ENCODE measurements at regions of chr21 and their contacts with region 1.

Region 1: GRCh38 chr21:41816220-41817165 is 49.6 kb upstream of the RIPK4 start:
- DNase-seq: peak; percentile 38
- H3K4me3 ChIP-seq: no peak overlapping the region
- H3K27ac ChIP-seq: no peak overlapping the region
- H3K4me1 ChIP-seq: peaks cover 6% of the 10 kb centered on the region
- H3K27me3 ChIP-seq: no peaks in the 10 kb centered on the region
- CTCF ChIP-seq: peak; percentile 60 to 62

Region 2: DNA sequence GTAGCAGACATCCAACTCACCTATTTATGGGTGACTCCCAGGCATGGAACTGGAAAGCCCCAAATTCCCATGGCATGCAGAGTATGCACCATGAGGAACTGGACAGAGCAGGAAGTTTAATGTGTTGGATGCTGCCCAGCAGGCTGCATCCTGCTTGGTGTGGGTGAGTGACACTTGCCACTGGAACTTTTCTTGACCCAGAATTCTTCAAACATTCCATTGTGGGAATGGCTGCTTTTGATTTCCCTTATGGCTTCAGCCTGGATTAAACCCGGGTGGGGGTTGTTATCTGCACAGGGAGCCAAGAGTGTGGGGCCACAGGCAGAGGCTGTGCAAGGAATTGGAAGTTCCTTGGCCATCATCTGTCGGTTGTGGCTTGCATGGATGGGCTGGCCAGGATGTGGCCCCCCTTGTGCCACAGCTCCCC is 675.4 kb before region 1 on chr21:
- CTCF ChIA-PET with region 1: no interaction called
- dilution Hi-C with region 1: no loop called
- in situ Hi-C with region 1: no loop called
- intact Hi-C with region 1: no loop called
- DNase-seq: peak; percentile 69
- H3K4me3 ChIP-seq: no peak overlapping the region
- H3K27ac ChIP-seq: peak overlapping the region; percentile 6
- H3K4me1 ChIP-seq: peaks cover 29% of the 10 kb centered on the region
- H3K27me3 ChIP-seq: no peaks in the 10 kb centered on the region
- CTCF ChIP-seq: no peak

Region 3: DNA sequence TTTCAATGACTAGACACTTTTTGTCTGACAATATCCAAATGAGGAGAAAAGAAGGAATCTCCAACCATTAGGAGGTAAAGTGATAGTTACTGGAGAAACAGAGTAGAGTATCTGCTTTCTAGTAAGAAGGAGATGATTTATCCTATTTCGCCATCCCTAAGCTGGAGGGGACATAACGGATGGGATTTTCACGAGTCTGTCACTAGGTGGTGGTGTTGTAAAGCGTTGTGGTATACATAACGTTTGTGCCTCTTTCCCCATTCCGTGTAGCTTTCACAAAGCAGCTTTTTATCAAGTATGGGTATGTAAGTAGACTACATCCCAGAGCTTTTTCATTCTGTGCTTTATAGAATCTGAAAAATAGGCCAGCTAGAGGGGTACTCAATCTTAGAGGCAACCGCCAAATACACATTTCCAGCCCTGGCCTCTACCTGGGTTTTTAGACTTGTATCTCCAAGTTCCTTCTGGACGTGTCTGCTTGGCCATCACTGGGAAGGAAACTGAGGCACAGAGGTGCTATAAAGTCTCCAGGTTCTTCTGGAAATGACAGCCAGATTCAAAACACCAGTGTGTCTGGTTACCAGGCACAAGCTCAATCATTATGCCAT is 533.2 kb before region 1 on chr21:
- CTCF ChIA-PET with region 1: interaction called, 8 read pairs
- dilution Hi-C with region 1: no loop called
- in situ Hi-C with region 1: no loop called
- intact Hi-C with region 1: loop called (anchors 1 kb)
- DNase-seq: peak; percentile 69
- H3K4me3 ChIP-seq: no peak overlapping the region
- H3K27ac ChIP-seq: no peak overlapping the region
- H3K4me1 ChIP-seq: no peaks in the 10 kb centered on the region
- H3K27me3 ChIP-seq: no peaks in the 10 kb centered on the region
- CTCF ChIP-seq: peak; percentile 82 to 83

Region 4: DNA sequence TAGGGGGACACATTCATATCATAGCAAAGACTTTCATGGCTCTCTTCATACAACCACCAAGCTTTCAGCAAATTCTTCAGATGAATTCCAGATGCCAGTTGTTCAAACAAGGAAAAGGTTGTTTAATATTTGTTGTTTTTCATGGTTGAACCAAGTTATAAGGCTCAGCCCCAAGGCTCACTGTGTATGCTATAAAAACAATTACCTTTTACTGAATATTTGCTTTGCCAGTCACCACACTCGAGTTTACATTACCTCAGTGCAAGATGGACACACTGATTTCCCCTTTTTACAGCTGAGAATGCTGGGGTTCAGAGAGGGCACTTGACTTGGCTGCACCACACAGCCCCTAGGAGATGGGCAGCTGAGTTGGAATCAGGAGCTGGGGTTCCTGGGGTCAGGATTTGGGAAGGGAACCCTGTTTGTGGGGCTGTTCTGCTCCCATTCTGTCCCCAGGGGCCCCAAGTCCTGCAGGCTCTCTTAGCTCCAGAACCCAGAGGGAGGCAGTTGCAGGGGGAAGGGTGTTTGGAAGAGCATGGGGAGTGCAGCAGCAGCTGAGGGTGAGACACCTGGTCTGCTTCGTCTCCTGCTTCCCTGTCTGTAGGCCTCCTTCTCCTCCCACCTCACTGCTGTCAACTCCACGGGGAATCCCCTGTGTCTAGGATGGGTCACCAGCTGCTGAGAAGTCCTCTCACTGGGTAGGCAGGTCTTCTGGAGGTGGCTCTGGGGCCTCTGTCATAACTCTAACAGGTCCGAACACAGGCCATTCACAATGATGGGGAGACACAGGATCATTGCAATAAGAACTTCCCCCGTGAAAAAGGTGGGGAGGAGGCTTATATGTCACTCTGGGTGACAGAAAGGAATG is 295.7 kb before region 1 on chr21:
- CTCF ChIA-PET with region 1: no interaction called
- dilution Hi-C with region 1: no loop called
- in situ Hi-C with region 1: no loop called
- intact Hi-C with region 1: no loop called
- DNase-seq: no peak
- H3K4me3 ChIP-seq: no peak overlapping the region
- H3K27ac ChIP-seq: no peak overlapping the region
- H3K4me1 ChIP-seq: no peaks in the 10 kb centered on the region
- H3K27me3 ChIP-seq: no peaks in the 10 kb centered on the region
- CTCF ChIP-seq: no peak

Region 5: GRCh38 chr21:41768437-41769061 is 47.9 kb before region 1 on chr21:
- CTCF ChIA-PET with region 1: interaction called, 3 read pairs
- dilution Hi-C with region 1: no loop called
- in situ Hi-C with region 1: no loop called
- intact Hi-C with region 1: loop called (anchors 1 kb)
- DNase-seq: peak; percentile 87
- H3K4me3 ChIP-seq: peak overlapping the region; percentile 87 to 94 (median 92)
- H3K27ac ChIP-seq: peak overlapping the region; percentile 95
- H3K4me1 ChIP-seq: peaks cover 28% of the 10 kb centered on the region
- H3K27me3 ChIP-seq: no peaks in the 10 kb centered on the region
- CTCF ChIP-seq: peak; percentile 24 to 47

Region 6: GRCh38 chr21:41835711-41836154 is 19.2 kb after region 1 on chr21:
- CTCF ChIA-PET with region 1: no interaction called
- dilution Hi-C with region 1: no loop called
- in situ Hi-C with region 1: no loop called
- intact Hi-C with region 1: no loop called
- DNase-seq: no peak
- H3K4me3 ChIP-seq: no peak overlapping the region
- H3K27ac ChIP-seq: no peak overlapping the region
- H3K4me1 ChIP-seq: no peaks in the 10 kb centered on the region
- H3K27me3 ChIP-seq: no peaks in the 10 kb centered on the region
- CTCF ChIP-seq: no peak

Region 7: GRCh38 chr21:41926117-41926806 is 109.8 kb after region 1 on chr21:
- CTCF ChIA-PET with region 1: no interaction called
- dilution Hi-C with region 1: no loop called
- in situ Hi-C with region 1: loop called in 1 of 2 experiments (anchors 25 kb)
- intact Hi-C with region 1: no loop called
- DNase-seq: peak; percentile 52
- H3K4me3 ChIP-seq: peak overlapping the region; percentile 18 to 50 (median 34)
- H3K27ac ChIP-seq: peak overlapping the region; percentile 75
- H3K4me1 ChIP-seq: peaks cover 70% of the 10 kb centered on the region
- H3K27me3 ChIP-seq: no peaks in the 10 kb centered on the region
- CTCF ChIP-seq: no peak

Region 8: DNA sequence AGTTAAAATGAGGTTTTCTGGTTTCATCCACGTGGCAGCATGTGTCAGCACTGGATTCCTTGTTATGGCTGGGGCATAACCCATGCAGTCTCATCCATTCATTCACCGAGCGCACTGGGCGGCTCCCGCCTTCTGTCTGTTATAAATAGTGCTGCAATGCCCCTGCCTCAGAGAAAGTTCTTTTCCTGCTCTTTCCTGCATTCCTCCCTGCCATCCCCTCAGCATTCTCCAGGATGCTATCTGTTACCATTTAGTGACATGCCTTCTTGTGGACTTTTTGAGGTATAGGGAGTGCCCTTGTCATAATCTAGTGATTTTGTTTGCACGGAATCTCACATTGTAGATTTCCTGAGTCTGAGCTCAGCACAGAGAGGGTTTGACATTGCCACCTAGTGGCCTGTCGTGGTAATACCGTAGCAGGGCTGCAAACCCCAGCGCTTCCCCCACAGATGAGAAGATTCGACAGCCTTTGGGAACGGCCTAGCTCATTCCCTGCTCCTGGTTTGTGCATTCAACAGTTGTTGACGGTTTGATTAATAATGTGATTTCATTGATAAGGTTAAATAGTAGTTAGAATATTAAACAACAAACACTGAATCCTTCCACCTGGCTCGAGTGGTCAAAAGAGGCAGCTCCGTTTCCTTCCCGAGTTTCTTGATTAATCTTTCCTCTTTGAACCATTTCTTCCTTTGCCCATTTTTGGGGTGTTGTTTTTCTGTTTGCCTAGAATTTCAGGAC is 300.9 kb after region 1 on chr21:
- CTCF ChIA-PET with region 1: no interaction called
- dilution Hi-C with region 1: no loop called
- in situ Hi-C with region 1: loop called in 1 of 2 experiments (anchors 25 kb)
- intact Hi-C with region 1: loop called (anchors 1 kb)
- DNase-seq: peak; percentile 48
- H3K4me3 ChIP-seq: no peak overlapping the region
- H3K27ac ChIP-seq: no peak overlapping the region
- H3K4me1 ChIP-seq: peaks cover 13% of the 10 kb centered on the region
- H3K27me3 ChIP-seq: no peaks in the 10 kb centered on the region
- CTCF ChIP-seq: peak; percentile 91 to 94

Measured in mammary epithelial cell (primary cell).